HAP-1 (cell line): ENCODE measurements at regions of chr11 and their contacts with region 1.

Region 1: DNA sequence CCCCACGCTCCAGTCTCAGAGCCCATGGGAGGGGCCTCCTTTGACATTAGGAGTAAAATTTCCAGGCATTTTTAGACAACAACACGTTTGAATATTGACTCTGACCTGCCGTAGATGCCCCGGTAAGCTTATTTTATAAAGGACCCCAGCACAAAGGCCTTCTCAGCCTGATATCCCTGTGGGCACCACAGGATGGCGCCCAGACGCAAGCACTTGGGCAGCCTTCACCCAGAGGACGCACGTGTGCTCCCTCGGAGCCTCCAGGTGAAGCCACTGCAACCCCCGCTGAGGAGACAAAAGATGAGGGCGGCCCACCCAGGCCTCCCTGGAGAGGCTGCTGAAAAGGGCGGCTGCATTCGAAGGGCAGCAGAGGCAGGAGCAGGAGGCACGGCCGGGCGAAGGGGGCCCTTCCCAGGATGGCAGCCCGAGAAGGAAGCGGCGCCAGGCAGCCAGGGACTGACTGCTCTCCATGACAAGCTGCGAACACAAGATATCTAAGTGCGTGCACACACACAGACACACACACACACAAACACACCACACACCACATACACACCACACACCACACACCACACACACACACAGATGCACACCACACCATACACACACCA is 15.2 kb upstream of the TH start:
- DNase-seq: peak; percentile 13 to 60
- H3K4me3 ChIP-seq: no peak overlapping the region
- H3K4me1 ChIP-seq: no peaks in the 10 kb centered on the region
- H3K27me3 ChIP-seq: peaks cover 13% of the 10 kb centered on the region

Region 2: DNA sequence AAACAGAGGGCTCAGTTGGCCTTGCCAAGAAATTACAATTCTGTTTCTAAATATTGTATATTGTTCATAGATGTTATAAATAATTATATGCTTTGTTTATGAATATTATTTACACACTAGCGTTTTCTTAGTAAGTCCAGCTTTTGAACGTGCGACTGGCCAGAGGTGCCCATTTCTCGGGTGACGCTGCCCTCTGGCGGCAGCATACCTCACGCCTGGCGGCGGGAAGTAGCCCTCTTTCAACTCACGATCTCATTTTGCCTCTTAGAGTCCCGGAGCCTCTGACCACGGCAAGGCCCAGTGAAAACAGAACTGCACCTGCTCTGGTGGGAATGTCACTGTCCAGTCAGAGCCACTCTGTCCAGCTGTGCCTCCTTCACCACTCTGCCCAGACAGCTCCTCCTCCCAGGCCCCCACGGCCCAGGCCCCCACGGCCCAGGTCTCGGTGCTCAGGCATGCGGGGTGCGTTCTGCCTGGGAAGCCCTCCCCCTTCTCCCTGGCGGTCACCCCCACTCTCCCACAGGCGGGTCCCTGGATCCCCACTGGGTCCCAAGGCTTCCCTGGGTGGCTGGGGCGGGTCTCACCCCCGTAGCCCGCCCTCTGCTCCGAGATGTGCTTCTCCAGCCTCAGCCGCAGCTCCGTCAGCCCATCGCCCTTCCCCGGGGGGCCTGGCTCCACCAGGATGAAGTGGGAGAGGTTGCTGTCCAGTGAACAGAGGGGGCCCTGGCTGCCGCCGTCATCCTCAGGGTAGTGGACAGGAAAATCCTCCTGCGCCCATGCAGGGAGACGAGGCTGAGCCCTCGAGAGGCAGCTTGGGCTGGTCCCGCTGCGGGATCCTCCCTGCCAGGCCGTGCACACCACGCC is 233.1 kb after region 1 on chr11:
- in situ Hi-C with region 1: loop called (anchors 5 kb)
- DNase-seq: peak; percentile 55 to 78
- H3K4me3 ChIP-seq: no peak overlapping the region
- H3K4me1 ChIP-seq: no peaks in the 10 kb centered on the region
- H3K27me3 ChIP-seq: no peaks in the 10 kb centered on the region; the same call in 1 of the 2 replicates